HepG2 (cell line): ENCODE measurements at regions of chr6 and their contacts with region 1.

Region 1: DNA sequence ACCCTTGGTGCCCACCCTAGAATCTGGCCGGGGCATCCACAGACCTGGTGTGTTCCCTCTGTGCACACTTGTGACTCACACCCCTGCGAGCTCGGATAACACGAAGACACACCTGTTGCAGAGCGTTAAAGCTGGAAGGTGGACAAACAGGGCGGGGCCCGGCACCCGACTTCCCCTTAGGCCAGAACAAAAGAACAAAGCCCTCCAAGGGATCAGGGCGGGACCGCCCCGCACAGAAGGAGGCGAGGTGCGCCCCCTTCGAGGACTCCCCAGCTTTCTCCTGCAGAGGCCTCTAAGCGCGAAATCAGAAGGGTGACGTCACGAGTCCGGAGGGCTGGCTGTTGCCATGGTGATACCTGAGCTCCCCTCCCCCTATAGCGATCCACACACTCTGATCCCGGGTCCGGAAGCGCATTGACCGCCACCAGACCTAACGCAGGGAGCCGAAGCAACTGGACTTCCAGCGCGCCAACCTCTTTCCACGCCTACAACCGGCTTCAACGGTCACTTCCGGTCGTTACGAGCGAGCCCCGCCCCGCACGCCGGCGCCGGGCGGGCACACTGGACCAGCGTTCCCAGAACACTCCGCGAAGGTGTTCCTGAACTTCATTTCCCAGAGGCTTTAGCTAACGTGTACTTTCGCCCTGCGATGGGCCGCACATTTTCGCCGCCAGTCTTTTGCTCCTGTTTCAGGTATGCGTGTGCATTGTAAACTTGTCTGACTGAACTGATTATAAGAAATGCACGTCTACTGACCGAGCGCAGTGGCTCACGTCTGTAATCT is at the start of gene ZNF184:
- DNase-seq: peak; percentile 99
- ATAC-seq: peak; percentile 96
- H3K4me3 ChIP-seq: peak within 1 kb of the TSS; percentile 80 to 89 (median 84)
- H3K27ac ChIP-seq: peak within 1 kb of the TSS; percentile 91
- H3K4me1 ChIP-seq: peaks cover 33% of the 10 kb centered on the region
- H3K27me3 ChIP-seq: no peaks in the 10 kb centered on the region; a peak in 1 of 5 replicates
- CTCF ChIP-seq: peak; percentile 54
- EP300 ChIP-seq: no peak; a peak in 4 of 4 replicates
- POLR2A ChIP-seq: peak; percentile 85 to 93
- RAD21 ChIP-seq: no peak
- total RNA-seq, gene ZNF184: 10.1 and 16.3 TPM in 2 replicates

Region 2: DNA sequence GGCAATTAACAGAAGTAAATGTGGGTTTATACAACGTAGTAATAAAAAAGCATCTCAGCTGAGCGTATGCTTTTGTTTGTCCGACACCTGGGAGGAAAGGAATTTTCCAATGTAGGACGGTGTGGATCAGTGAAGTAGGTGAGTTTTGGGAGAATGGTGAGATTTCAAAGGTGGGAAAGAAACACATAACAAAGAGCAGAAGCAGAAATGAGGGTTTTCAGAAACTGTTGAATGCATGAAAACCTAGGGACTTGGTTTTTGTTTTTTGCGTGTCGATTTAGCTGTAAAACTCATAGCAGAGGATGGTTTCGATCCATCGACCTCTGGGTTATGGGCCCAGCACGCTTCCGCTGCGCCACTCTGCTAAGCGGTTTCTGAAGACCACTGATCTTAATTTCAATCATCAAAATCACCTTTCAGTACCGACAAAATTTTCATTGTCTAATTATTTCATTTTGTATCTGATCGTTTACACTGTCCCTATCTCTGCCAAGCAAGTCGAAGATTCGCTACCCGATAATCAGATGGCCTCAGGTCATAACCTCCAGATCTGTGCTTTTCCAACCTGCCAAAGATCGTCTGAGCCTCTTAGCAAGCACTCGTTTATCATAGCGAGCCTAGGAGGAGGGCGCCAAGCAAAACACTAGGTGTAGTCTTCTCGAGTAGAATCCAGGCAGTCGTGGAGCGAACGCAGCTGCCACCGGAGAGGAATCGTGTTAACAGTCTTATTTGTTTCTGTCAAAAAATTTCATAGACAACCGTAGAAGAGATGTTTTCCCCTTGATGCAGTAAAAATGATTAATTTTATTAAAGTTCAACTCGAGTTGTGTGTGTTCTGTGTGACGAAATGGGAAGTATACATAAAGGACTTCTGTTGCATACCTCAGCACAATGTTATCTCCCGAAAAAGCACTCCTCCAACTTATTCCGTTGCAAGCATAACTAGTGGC is 139.8 kb before region 1 on chr6:
- CTCF ChIA-PET with region 1: no interaction called
- POLR2A ChIA-PET with region 1: interaction called, 3 read pairs
- in situ Hi-C with region 1: no loop called
- intact Hi-C with region 1: loop called (anchors 2 kb)
- DNase-seq: peak; percentile 75
- ATAC-seq: peak; percentile 91
- H3K4me3 ChIP-seq: peak overlapping the region; percentile 65 to 78 (median 77)
- H3K27ac ChIP-seq: peak overlapping the region; percentile 11
- H3K4me1 ChIP-seq: peaks cover 47% of the 10 kb centered on the region
- H3K27me3 ChIP-seq: 0 out of 5 replicates have a peak, but pooled peaks cover 0 to 5% of the 10 kb centered on the region in 2 experiments
- CTCF ChIP-seq: peak; percentile 23; the same call in 1 of the 2 replicates
- EP300 ChIP-seq: no peak
- POLR2A ChIP-seq: no peak
- RAD21 ChIP-seq: no peak

Region 3: GRCh38 chr6:27388293-27389197 is 84.3 kb before region 1 on chr6 and contains the start of gene ZNF391:
- CTCF ChIA-PET with region 1: no interaction called
- POLR2A ChIA-PET with region 1: interaction called, 7 read pairs
- in situ Hi-C with region 1: no loop called
- intact Hi-C with region 1: loop called (anchors 1 kb)
- DNase-seq: peak; percentile 81
- ATAC-seq: peak; percentile 99
- H3K4me3 ChIP-seq: peak within 1 kb of the TSS; percentile 68 to 87 (median 81)
- H3K27ac ChIP-seq: peak within 1 kb of the TSS; percentile 54
- H3K4me1 ChIP-seq: no peaks in the 10 kb centered on the region
- H3K27me3 ChIP-seq: no peaks in the 10 kb centered on the region; a peak in 1 of 5 replicates
- CTCF ChIP-seq: no peak
- EP300 ChIP-seq: no peak; a peak in 1 of 4 replicates
- POLR2A ChIP-seq: peak; percentile 60 to 78
- RAD21 ChIP-seq: peak; percentile 47; the same call in 1 of the 2 replicates
- total RNA-seq, gene ZNF391: 1.7 and 2.7 TPM in 2 replicates

Region 4: DNA sequence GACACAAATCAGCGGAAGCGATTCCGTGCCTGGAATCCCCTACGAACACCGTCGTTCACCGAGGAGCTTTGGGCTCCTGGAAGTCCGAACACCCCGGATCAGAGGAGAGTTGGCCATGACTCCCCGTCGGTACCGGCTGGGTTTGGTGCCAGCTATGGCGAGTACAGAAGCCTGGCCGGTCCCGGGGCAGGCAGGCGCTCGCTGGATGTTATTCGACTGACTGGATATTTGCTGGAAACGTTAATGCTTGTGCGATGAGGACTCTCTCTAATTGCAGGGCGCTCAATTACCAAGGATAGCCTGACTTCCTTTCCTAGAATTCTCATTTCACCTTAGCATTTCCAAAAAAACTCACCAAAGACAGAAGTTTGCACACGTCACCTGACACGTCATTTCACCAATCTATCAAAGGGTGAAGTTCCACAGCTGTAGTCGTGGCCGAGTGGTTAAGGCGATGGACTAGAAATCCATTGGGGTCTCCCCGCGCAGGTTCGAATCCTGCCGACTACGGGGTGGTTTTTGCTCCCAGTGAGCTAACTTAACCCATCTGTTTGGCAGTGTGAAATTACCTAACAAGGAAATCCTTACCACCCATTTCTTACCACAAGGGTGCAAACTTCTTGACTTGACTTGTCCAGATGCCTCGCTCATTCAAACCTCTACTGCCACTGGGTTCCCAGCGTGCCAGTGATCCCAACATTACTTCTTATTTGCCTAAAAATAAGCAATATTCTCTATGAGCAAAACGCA is 22.8 kb after region 1 on chr6:
- CTCF ChIA-PET with region 1: no interaction called
- POLR2A ChIA-PET with region 1: interaction called, 13 read pairs
- in situ Hi-C with region 1: no loop called
- intact Hi-C with region 1: no loop called
- DNase-seq: peak; percentile 80
- ATAC-seq: peak; percentile 85
- H3K4me3 ChIP-seq: peak overlapping the region; percentile 69 to 87 (median 86)
- H3K27ac ChIP-seq: no peak overlapping the region
- H3K4me1 ChIP-seq: peaks cover 28% of the 10 kb centered on the region
- H3K27me3 ChIP-seq: peaks cover 0 to 9% of the 10 kb centered on the region in 2 experiments; a peak in 1 of 5 replicates
- CTCF ChIP-seq: peak; percentile 31
- EP300 ChIP-seq: 0 out of 4 replicates have a peak, but pooled peaks of 1 of the 2 experiments have one; percentile 34
- POLR2A ChIP-seq: no peak
- RAD21 ChIP-seq: no peak

Region 5: DNA sequence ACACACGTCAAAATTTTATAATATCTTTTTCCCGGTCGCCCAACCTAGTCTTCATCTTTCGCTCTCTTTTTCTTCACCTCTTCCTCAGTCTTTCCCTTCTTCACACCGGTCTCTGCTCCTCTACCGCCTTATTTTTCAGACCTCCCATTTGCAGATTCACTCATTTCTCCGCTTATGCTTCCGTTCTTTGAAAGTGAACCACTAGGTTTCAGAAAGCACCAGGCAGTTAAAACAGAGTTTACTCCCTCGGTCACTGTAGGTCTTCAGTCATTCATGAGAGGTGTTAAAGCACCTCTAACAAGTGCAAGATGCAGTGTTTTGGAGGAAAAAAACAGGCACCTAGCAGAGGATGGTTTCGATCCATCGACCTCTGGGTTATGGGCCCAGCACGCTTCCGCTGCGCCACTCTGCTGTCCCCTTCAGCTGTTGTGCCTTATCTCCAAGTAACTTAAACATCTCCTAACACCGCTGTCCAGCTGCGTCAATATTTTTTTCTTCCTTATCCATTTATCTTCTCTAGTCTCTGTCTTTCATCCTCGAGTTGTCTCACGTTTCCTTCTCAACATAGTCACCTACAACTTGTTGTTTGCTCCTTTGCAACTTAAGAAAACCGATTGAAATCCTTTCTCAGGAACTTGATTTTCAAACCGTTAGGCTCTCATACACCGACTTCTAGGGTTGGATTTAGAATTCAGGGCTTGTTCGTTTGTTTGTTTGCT is 119.8 kb after region 1 on chr6:
- CTCF ChIA-PET with region 1: no interaction called
- POLR2A ChIA-PET with region 1: interaction called, 4 read pairs
- in situ Hi-C with region 1: no loop called
- intact Hi-C with region 1: loop called (anchors 5 kb)
- DNase-seq: peak; percentile 84
- ATAC-seq: peak; percentile 96
- H3K4me3 ChIP-seq: peak overlapping the region; percentile 58 to 76 (median 74)
- H3K27ac ChIP-seq: no peak overlapping the region
- H3K4me1 ChIP-seq: peaks cover 37% of the 10 kb centered on the region
- H3K27me3 ChIP-seq: peaks cover 0 to 22% of the 10 kb centered on the region in 2 experiments; a peak in 1 of 5 replicates
- CTCF ChIP-seq: no peak
- EP300 ChIP-seq: 0 out of 4 replicates have a peak, but pooled peaks of 1 of the 2 experiments have one; percentile 29
- POLR2A ChIP-seq: no peak
- RAD21 ChIP-seq: no peak